ENCODE measurements at regions of chr16 and their contacts with region 1.

Region 1: DNA sequence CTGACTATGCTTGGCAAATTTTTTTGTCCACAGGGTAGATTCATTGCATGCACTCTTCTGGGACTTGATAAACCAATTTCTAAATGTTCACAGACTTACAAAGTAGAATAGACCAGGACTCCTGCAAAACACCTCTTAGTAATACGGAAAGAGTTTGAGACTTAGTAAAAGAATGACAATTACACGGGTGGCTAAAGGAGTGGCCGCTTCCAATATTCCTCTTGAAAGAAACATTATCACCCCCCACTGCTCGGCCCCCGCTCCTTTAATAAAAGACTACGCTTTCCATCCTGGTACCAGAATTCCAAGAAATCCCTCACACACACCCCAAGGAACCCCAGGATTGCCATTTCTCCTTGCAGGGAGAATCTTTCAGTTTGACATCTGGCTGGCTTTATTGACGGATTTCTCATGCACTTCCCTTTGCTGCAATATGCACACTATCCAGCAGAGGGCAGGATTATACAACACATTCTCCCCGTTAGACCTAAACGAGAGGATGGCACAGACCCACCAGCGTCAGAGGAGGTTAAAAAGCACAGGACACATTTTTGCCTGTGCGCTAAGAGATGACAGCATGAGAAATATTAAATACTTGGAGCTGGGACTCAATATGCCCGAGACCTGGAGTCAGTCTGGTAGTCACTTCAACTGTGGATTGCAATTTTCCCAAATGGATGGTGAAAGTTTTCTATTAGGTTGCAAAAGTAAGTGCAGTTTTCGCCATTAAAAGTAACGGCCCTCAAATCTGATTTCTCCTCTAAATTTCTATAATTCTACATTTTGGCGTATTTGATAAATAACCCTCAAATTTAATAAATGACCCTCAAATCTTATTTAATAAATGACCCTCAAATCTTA is 46.6 kb upstream of the NUDT7 start:
- DNase-seq: peak; percentile 50
- ATAC-seq: peak; percentile 89
- H3K4me3 ChIP-seq: peak overlapping the region in 1 of 2 experiments; percentile 37; a peak in 2 of 4 replicates
- H3K27ac ChIP-seq: no peak overlapping the region
- H3K4me1 ChIP-seq: peaks cover 6% of the 10 kb centered on the region
- H3K27me3 ChIP-seq: no peaks in the 10 kb centered on the region
- CTCF ChIP-seq: peak; percentile 81

Region 2: DNA sequence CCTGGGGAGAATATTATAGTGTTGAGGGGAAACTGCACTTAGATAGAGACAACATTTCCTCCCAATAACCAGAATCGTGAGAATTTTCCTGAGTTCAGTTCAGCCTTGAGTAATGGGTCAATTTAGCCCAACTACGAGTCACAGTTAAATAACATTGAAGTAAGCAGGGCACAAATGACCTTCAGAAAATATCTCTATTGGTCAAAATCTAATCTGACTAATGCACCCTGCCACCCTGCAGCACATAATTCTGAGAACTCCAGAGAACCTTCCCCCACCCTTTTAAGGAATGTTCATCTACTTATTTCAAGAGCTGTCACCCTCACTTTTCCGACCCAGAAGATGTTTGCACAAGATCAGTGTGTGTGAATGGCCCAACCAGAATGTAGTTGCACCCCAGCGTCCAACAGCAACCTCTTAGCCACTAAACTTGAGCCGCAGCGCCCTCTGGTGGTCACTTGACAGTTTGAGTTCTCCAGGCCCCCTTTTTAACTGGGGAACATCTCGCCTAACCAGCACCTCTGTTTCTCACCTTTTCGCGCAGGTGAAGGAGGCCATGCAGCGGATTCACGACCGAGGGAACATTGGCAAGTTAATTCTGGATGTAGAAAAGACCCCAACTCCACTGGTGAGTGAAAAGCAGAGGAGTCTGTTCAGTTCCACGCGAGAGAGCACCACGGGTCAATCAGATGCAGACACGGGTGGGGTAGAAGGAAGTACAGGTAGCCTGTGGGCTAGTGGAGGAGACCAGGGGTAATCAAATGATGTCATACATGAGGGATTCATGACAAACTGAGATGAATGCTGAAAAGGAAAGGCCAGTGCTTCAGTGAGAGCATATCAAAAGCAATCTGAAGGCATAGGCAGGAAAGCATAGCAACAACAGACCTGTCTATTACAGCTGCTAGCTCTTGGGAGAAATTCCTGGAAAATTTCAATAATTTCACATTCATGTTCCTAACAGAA is 295.9 kb after region 1 on chr16:
- CTCF ChIA-PET with region 1: no interaction called
- POLR2A ChIA-PET with region 1: no interaction called
- in situ Hi-C with region 1: no loop called
- intact Hi-C with region 1: loop called (anchors 1 kb)
- DNase-seq: peak; percentile 15
- ATAC-seq: peak; percentile 90
- H3K4me3 ChIP-seq: no peak overlapping the region
- H3K27ac ChIP-seq: no peak overlapping the region
- H3K4me1 ChIP-seq: no peaks in the 10 kb centered on the region
- H3K27me3 ChIP-seq: no peaks in the 10 kb centered on the region
- CTCF ChIP-seq: peak; percentile 77

Region 3: DNA sequence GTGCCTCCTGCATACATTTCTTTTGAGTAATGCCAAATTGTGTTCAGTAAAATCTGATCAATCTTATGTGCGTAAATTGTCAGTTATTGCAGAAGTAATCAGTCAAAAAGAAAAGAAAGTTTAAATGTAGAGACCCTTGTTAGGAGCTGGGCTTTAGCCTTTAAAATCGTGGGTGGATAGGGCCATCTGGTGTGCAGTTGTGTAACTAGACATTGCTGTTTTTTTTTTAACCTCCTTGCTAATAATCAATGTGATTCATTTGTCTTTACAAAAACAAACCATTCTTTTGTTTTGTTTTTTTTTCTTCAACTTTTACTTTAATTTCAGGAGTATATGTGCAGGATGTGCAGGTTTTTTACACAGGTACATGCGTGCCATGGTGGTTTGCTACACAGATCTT is 418.5 kb after region 1 on chr16:
- CTCF ChIA-PET with region 1: no interaction called
- POLR2A ChIA-PET with region 1: no interaction called
- in situ Hi-C with region 1: no loop called
- intact Hi-C with region 1: loop called (anchors 5 kb)
- DNase-seq: no peak
- ATAC-seq: no peak
- H3K4me3 ChIP-seq: no peak overlapping the region
- H3K27ac ChIP-seq: no peak overlapping the region
- H3K4me1 ChIP-seq: no peaks in the 10 kb centered on the region
- H3K27me3 ChIP-seq: no peaks in the 10 kb centered on the region
- CTCF ChIP-seq: peak; percentile 11; the same call in 1 of the 2 replicates